Activated naive CD4-positive, alpha-beta T cell treated with anti-CD3 and anti-CD28 coated beads for 36 hours (primary cell): ENCODE measurements at regions of chr16 and their contacts with region 1.

Region 1: GRCh38 chr16:24807301-24807700 is 38.5 kb upstream of the SLC5A11 start:
- DNase-seq: no peak
- H3K4me3 Mint-ChIP-seq: no peak overlapping the region
- H3K27ac Mint-ChIP-seq: no peak overlapping the region
- H3K4me1 Mint-ChIP-seq: no peaks in the 10 kb centered on the region
- H3K27me3 Mint-ChIP-seq: no peaks in the 10 kb centered on the region

Region 2: GRCh38 chr16:24580665-24581064 is 226.6 kb before region 1 on chr16:
- CTCF ChIA-PET with region 1: no interaction called
- intact Hi-C with region 1: loop called (anchors 5 kb)
- DNase-seq: no peak
- H3K4me3 Mint-ChIP-seq: no peak overlapping the region
- H3K27ac Mint-ChIP-seq: no peak overlapping the region
- H3K4me1 Mint-ChIP-seq: peaks cover 5% of the 10 kb centered on the region
- H3K27me3 Mint-ChIP-seq: peaks cover 6% of the 10 kb centered on the region

Region 3: GRCh38 chr16:24789881-24790280 is 17.4 kb before region 1 on chr16:
- CTCF ChIA-PET with region 1: no interaction called
- intact Hi-C with region 1: no loop called
- DNase-seq: no peak
- H3K4me3 Mint-ChIP-seq: no peak overlapping the region
- H3K27ac Mint-ChIP-seq: no peak overlapping the region
- H3K4me1 Mint-ChIP-seq: no peaks in the 10 kb centered on the region
- H3K27me3 Mint-ChIP-seq: no peaks in the 10 kb centered on the region